Right ventricle myocardium inferior (tissue), 1 donor: ENCODE measurements at regions of chr9 and their contacts with region 1.

Region 1: DNA sequence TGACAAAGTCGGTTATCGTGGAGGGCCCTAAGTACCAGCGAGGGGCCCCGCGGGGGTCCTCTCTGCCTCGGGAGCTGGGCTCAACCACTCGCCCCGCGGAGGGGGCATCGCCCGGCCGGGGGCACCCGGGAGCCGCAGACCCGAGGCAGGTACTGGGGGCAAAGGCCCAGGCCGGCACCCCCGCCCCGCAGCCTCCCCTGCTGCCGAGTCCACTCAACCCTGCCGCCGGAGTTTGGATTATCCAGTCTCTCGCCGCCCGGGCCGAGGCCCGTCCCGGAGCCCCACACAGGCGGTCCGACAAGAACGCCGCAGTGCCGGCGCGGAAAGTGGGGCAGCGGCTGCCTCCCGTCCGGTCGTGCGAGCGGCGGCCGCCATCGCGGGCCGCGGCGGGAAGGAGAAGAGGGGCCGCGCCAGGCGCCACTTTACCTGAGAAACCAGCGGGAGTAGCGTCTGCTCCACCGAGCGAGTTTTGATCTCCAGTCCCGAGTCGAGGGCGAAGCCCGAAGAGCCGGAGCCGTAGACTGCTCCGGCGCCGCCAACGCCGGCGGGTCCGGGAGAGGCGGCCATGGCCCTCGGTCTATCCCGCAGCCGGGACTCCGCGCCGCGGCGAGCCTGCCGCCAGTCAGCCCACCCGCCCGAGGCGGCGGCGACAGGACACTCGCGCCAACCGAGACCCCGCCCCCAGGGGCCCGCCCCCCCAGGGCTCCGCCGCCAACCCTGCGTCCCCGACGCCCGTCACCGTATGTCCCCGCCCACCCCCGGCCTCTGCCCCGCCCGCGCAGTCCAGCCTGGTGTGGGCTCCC is at the start of gene CTNNAL1:
- DNase-seq: peak; percentile 95
- ATAC-seq: peak; percentile 98
- total RNA-seq, gene CTNNAL1: 70.7 TPM

Region 2: GRCh38 chr9:108963459-108964143 is 49.5 kb before region 1 on chr9:
- intact Hi-C with region 1: loop called (anchors 5 kb)
- DNase-seq: no peak
- ATAC-seq: peak; percentile 43

Region 3: GRCh38 chr9:108996643-108997042 is 16.4 kb before region 1 on chr9:
- intact Hi-C with region 1: loop called (anchors 2 kb)
- DNase-seq: no peak
- ATAC-seq: no peak

Region 4: DNA sequence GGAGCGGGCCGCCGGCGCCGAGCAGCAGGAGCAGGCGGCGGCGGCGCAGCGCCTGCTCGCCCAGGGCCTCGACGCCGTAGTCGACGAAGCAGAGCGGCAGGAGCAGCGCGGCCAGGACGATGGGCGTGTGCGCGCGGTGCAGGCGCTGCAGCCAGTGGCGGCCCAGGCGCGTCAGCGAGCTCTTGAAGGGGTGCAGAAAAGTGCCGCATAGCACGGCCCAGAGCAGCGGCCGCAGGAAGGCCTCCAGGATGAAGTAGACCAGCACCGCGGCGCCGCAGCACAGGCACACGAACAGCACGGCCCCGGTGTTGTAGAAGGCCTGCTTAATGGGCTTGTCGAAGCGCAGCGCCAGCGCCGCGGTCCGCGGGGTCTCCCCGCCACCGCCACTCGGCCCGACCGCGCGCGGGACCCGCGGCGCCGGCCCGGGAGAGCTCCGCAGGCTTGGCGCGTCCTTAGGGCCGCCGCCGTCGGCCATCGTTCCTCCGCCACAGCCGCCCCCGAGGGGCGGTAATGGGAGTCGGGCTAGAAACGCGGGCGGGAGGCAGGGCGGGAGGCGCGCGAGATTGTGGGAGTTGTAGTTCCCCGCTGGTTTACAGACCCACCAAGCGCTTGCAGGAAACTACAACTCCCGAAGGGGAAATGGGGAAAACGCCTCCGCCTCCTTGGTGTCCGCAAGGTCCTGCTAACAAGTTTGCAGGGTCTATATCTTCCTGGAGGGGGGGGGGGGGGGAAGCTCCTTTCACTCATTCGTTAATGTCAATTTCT is 106.5 kb after region 1 on chr9 and contains the start of gene TMEM245:
- intact Hi-C with region 1: loop called (anchors 5 kb)
- DNase-seq: peak; percentile 96
- ATAC-seq: peak; percentile 98
- total RNA-seq, gene TMEM245: 95.1 TPM

Region 5: GRCh38 chr9:109469646-109470358 is 456.7 kb after region 1 on chr9:
- intact Hi-C with region 1: no loop called
- DNase-seq: no peak
- ATAC-seq: peak; percentile 73